HCT116 (cell line): ENCODE measurements at regions of chr1 and their contacts with region 1.

Region 1: GRCh38 chr1:37434292-37434907 is 40.0 kb upstream of the ZC3H12A start:
- DNase-seq: no peak
- ATAC-seq: peak; percentile 96
- H3K4me3 ChIP-seq: no peak overlapping the region
- H3K27ac ChIP-seq: no peak overlapping the region
- H3K4me1 ChIP-seq: peaks cover 0 to 6% of the 10 kb centered on the region in 2 experiments; a peak in 1 of 4 replicates
- H3K27me3 ChIP-seq: peaks cover 13% of the 10 kb centered on the region; the same call in 1 of the 2 replicates
- CTCF ChIP-seq: peak; percentile 84 to 98 (median 97)
- POLR2A ChIP-seq: no peak
- RAD21 ChIP-seq: peak; percentile 93

Region 2: GRCh38 chr1:36553591-36554322 is 880.6 kb before region 1 on chr1:
- CTCF ChIA-PET with region 1: interaction called, 3 read pairs
- POLR2A ChIA-PET with region 1: no interaction called
- RAD21 ChIA-PET with region 1: no interaction called
- intact Hi-C with region 1: loop called (anchors 10 kb)
- DNase-seq: peak; percentile 60
- ATAC-seq: peak; percentile 100
- H3K4me3 ChIP-seq: no peak overlapping the region
- H3K27ac ChIP-seq: no peak overlapping the region
- H3K4me1 ChIP-seq: 0 out of 4 replicates have a peak, but pooled peaks cover 0 to 3% of the 10 kb centered on the region in 2 experiments
- H3K27me3 ChIP-seq: peaks cover 49% of the 10 kb centered on the region
- CTCF ChIP-seq: peak; percentile 80 to 91 (median 83)
- POLR2A ChIP-seq: no peak
- RAD21 ChIP-seq: peak; percentile 88

Region 3: GRCh38 chr1:36576118-36576517 is 858.3 kb before region 1 on chr1:
- CTCF ChIA-PET with region 1: interaction called, 16 read pairs
- POLR2A ChIA-PET with region 1: no interaction called
- RAD21 ChIA-PET with region 1: no interaction called
- intact Hi-C with region 1: no loop called
- DNase-seq: peak; percentile 43
- ATAC-seq: peak; percentile 99
- H3K4me3 ChIP-seq: no peak overlapping the region
- H3K27ac ChIP-seq: no peak overlapping the region
- H3K4me1 ChIP-seq: no peaks in the 10 kb centered on the region
- H3K27me3 ChIP-seq: peaks cover 14% of the 10 kb centered on the region; the same call in 1 of the 2 replicates
- CTCF ChIP-seq: peak; percentile 59 to 92 (median 92); a peak in 5 of 6 replicates
- POLR2A ChIP-seq: no peak
- RAD21 ChIP-seq: peak; percentile 88

Region 4: GRCh38 chr1:36609241-36610027 is 825.0 kb before region 1 on chr1:
- CTCF ChIA-PET with region 1: interaction called, 3 read pairs
- POLR2A ChIA-PET with region 1: no interaction called
- RAD21 ChIA-PET with region 1: no interaction called
- intact Hi-C with region 1: loop called (anchors 10 kb)
- DNase-seq: peak; percentile 68
- ATAC-seq: peak; percentile 97
- H3K4me3 ChIP-seq: no peak overlapping the region
- H3K27ac ChIP-seq: no peak overlapping the region
- H3K4me1 ChIP-seq: no peaks in the 10 kb centered on the region
- H3K27me3 ChIP-seq: peaks cover 25% of the 10 kb centered on the region; the same call in 1 of the 2 replicates
- CTCF ChIP-seq: peak; percentile 70 to 99 (median 96)
- POLR2A ChIP-seq: no peak
- RAD21 ChIP-seq: peak; percentile 86

Region 5: DNA sequence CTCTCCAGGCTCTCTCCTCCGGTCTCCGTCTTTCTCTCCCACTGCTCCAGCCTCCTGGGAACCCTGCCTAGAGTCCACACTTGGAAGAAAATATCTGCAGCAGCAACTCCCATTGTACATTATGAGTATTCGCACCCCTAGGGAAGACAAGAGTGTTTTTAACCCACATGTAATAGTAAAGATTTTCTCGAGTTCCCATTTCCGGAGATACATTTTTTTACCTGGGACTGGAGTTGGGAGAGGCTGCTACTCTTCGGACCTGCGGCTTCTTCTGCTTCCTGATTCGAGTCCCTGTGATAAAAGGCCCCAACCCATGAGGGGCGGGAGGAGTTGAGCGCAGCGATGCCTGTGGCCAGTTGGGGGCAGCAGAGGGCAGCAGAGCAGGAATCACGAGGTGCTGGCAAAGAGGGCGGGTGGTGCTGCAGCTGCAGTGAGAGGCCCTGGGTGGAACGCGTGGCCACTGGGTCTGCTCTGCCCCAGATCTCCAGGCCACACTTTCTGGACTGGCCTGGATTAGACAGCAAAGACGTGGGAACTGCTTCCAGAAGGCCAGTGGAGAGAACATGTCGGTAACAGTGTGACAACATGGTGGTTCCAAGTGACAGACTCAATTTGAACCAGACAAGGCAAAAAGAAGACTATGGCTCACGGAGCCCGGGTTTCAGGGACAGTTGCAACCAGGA is 730.7 kb before region 1 on chr1:
- CTCF ChIA-PET with region 1: no interaction called
- POLR2A ChIA-PET with region 1: no interaction called
- RAD21 ChIA-PET with region 1: no interaction called
- intact Hi-C with region 1: loop called (anchors 2 kb)
- DNase-seq: peak; percentile 58
- ATAC-seq: peak; percentile 98
- H3K4me3 ChIP-seq: no peak overlapping the region
- H3K27ac ChIP-seq: no peak overlapping the region
- H3K4me1 ChIP-seq: peaks cover 0 to 9% of the 10 kb centered on the region in 2 experiments; a peak in 2 of 4 replicates
- H3K27me3 ChIP-seq: peaks cover 47% of the 10 kb centered on the region
- CTCF ChIP-seq: peak; percentile 80 to 97 (median 91)
- POLR2A ChIP-seq: no peak
- RAD21 ChIP-seq: peak; percentile 94

Region 6: DNA sequence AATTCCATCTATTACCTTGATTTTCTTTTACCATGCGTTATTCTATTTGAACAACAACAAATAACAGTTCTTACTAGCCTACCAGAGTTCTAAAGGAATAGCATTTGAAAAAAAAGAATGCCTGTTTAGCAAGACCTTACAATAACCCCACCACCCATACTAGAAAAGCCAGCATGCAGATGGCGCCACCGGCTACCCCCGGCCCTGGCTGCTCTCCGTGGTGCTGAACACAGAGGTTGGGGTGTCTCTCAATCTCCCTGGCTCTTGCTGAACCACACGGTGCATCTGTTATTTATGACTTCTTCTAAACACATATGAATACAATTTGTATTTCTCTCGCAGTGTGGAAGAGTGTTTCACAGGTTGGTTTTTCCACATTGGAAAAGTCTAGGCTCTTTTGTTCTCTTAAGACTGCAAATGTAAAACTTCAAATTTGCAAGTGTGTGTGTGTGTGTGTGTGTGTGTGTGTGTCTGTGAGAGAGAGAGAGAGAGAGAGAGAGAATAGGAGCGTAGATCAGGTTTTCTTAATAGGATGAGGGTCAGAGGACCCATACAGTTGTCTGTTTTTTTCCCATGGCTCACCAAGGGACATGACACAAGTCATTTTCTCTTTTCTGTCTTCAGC is 413.6 kb before region 1 on chr1:
- CTCF ChIA-PET with region 1: no interaction called
- POLR2A ChIA-PET with region 1: no interaction called
- RAD21 ChIA-PET with region 1: no interaction called
- intact Hi-C with region 1: loop called (anchors 10 kb)
- DNase-seq: no peak
- ATAC-seq: no peak
- H3K4me3 ChIP-seq: no peak overlapping the region
- H3K27ac ChIP-seq: no peak overlapping the region
- H3K4me1 ChIP-seq: no peaks in the 10 kb centered on the region
- H3K27me3 ChIP-seq: peaks cover 14% of the 10 kb centered on the region; the same call in 1 of the 2 replicates
- CTCF ChIP-seq: peak in 2 of 3 experiments; percentile 17 to 30; a peak in 1 of 6 replicates
- POLR2A ChIP-seq: no peak
- RAD21 ChIP-seq: 0 out of 2 replicates have a peak, but pooled peaks have one; percentile 21

Region 7: DNA sequence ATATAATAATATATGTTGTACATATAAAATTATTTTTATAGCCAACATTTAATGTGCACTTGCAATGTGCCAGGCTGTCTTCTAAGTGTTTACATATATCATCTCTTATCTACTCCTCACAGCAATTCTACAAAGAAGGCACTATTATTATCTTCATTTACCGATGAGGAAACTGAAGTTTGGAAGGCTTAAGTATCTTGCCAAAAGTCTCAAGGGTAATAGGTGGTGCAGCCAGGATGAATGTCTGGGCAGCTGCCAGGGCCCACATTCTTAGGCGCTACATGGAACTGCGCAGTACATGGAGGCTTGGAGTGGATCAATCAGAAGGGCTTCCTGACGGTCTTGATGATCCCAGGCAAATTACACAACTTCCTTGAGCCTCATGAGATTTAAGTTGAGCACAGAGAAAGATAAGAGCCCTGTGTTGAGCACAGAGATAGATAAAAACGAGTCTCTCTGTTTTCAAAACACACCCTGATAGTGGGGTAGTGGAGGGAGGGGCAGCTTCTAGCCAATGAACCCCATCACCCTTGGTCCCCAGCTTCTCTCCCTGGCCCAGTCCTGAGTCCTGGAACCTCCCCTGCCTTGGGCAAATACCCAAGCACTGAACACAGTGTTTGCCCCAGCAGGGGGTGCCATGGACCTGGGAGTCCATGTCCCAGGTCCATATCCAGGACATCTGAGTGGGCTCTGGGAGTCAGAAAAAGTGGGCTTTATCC is 603.0 kb after region 1 on chr1:
- CTCF ChIA-PET with region 1: no interaction called
- POLR2A ChIA-PET with region 1: no interaction called
- RAD21 ChIA-PET with region 1: no interaction called
- intact Hi-C with region 1: no loop called
- DNase-seq: no peak
- ATAC-seq: peak; percentile 42; the same call in 1 of the 2 replicates
- H3K4me3 ChIP-seq: no peak overlapping the region
- H3K27ac ChIP-seq: no peak overlapping the region
- H3K4me1 ChIP-seq: peaks cover 0 to 11% of the 10 kb centered on the region in 2 experiments; a peak in 1 of 4 replicates
- H3K27me3 ChIP-seq: no peaks in the 10 kb centered on the region
- CTCF ChIP-seq: peak; percentile 6 to 26 (median 23); a peak in 2 of 6 replicates
- POLR2A ChIP-seq: no peak
- RAD21 ChIP-seq: peak; percentile 64